Dendritic cell treated with granulocyte-macrophage colony-stimulating factor and Interleukin-4, amounts not matched to agents 40 ng/mL and 50 ng/mL, for 4 days (primary cell): ENCODE measurements at regions of chr10 and their contacts with region 1.

Region 1: GRCh38 chr10:104045151-104046089 is 40.3 kb downstream of the COL17A1 start:
- H3K4me3 Mint-ChIP-seq: no peak overlapping the region
- H3K27ac Mint-ChIP-seq: no peak overlapping the region
- H3K4me1 Mint-ChIP-seq: no peaks in the 10 kb centered on the region
- H3K27me3 Mint-ChIP-seq: no peaks in the 10 kb centered on the region

Region 2: GRCh38 chr10:103709341-103709920 is 336.0 kb before region 1 on chr10:
- intact Hi-C with region 1: no loop called
- H3K4me3 Mint-ChIP-seq: no peak overlapping the region
- H3K27ac Mint-ChIP-seq: no peak overlapping the region
- H3K4me1 Mint-ChIP-seq: no peaks in the 10 kb centered on the region
- H3K27me3 Mint-ChIP-seq: peaks cover 3% of the 10 kb centered on the region

Region 3: GRCh38 chr10:104209575-104210198 is 164.3 kb after region 1 on chr10:
- intact Hi-C with region 1: loop called (anchors 10 kb)
- H3K4me3 Mint-ChIP-seq: no peak overlapping the region
- H3K27ac Mint-ChIP-seq: no peak overlapping the region
- H3K4me1 Mint-ChIP-seq: peaks cover 15% of the 10 kb centered on the region
- H3K27me3 Mint-ChIP-seq: no peaks in the 10 kb centered on the region